ENCODE measurements at regions of chr1 and their contacts with region 1.

Region 1: GRCh38 chr1:155989242-155990004 is 11.1 kb upstream of the ARHGEF2 start:
- DNase-seq: peak; percentile 63
- H3K27ac ChIP-seq: peak overlapping the region; percentile 66
- CTCF ChIP-seq: peak; percentile 98

Region 2: GRCh38 chr1:155794605-155795245 is 194.7 kb before region 1 on chr1:
- CTCF ChIA-PET with region 1: no interaction called
- POLR2A ChIA-PET with region 1: no interaction called
- DNase-seq: no peak
- H3K27ac ChIP-seq: no peak overlapping the region
- CTCF ChIP-seq: no peak

Region 3: GRCh38 chr1:155938220-155938627 is 51.2 kb before region 1 on chr1:
- CTCF ChIA-PET with region 1: interaction called, 13 read pairs
- POLR2A ChIA-PET with region 1: no interaction called
- DNase-seq: peak; percentile 64
- H3K27ac ChIP-seq: no peak overlapping the region
- CTCF ChIP-seq: peak; percentile 79

Region 4: GRCh38 chr1:156060937-156061636 is 71.7 kb after region 1 on chr1 and contains the start of gene RAB25:
- CTCF ChIA-PET with region 1: no interaction called
- POLR2A ChIA-PET with region 1: no interaction called
- DNase-seq: peak; percentile 96
- H3K27ac ChIP-seq: no peak within 1 kb of the TSS
- CTCF ChIP-seq: no peak